Mucosa of descending colon (tissue), 3 donors: ENCODE measurements at regions of chr2 and their contacts with region 1.

Region 1: DNA sequence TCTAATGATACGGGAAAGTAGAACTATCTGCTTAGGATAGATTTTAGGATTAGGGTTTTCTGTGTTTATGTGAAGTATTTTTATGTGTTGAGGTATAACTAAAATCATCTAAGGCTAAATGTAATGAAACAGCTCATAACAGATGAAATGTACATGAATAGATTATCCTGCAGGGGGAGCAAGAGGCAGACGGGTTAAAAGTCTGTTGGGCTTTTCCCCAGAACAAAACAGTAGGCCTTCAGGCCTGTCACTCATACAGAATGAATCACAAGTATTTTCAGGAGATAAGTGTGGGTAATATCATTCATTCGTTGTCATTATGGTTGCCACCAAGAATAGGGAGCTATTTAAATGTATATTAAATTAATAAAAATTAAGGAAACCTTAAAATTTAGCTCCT is 107.9 kb upstream of the IL1R2 start:
- DNase-seq: peak in 1 of 3 donors; percentile 56
- ATAC-seq: peak; percentile 91
- H3K4me3 ChIP-seq: no peak overlapping the region
- H3K4me1 ChIP-seq: no peaks in the 10 kb centered on the region
- CTCF ChIP-seq: peak; percentile 43

Region 2: DNA sequence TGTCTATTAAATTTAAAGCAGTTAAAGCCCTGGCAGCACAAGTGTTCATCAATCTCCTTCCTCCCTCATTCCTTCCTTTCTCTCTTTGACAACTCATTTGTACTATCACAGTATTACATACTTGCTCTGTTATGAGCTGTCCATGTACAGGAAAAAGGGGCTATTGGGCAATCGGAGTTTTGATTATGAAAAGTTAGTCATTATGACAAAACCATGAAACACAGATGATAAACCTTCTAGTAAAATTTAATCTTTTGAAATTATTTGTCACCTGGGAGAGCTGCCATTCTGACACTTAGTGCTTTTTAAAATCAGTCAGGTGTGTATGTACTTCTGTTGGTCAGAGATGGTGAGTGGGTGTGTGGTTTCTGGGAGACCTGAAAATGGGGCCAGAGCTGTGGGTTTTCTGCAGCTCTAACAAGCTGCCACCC is 147.0 kb before region 1 on chr2:
- intact Hi-C with region 1: no loop called
- DNase-seq: no peak
- ATAC-seq: peak; percentile 26
- H3K4me3 ChIP-seq: no peak overlapping the region
- H3K4me1 ChIP-seq: peaks cover 7% of the 10 kb centered on the region
- CTCF ChIP-seq: no peak

Region 3: DNA sequence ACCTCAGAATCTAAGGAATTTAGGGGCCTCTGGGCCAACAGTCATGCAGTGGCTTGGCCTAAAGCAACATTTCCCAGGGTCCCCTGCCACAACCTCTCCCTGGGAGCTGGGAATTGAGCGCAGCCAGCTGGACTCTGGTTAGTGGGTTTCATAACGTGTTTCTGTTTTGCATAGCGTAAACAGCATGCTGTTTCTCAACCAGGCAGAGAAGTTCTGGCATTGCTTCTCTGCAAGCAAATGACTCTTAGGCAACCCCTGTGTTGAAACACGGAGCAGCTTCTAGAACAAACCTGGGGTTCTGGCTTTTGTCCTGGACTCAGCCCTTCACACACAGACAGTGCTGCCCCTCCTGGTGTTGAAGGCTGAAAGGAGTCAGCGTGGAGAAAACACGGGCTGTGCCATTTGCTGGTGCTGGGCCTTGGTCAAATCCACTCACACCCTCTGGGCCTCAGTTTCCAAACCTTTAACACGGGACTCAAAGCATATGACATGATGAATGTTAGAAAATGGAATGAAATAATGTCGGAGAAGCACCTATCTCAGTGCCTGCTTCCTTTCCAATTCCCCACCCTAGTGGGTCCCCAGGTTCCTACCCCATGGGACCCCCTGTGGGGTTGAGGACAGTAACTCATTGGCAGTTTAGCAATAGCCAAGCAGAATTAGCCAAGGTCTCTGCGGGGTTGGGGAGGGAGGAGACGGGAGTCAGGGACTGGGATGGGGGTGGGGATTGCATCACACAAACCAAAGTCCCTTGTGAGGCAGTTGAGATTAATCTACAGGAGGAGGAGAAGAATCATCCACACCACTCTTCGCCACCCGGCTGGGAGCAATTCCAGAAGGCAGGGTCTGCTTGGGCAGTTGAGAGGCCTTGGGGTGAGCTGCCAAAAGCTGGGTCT is 77.7 kb after region 1 on chr2:
- intact Hi-C with region 1: loop called in 1 of 2 experiments (anchors 10 kb)
- DNase-seq: peak; percentile 47 to 69 (median 60)
- ATAC-seq: peak; percentile 71
- H3K4me3 ChIP-seq: no peak overlapping the region
- H3K4me1 ChIP-seq: no peaks in the 10 kb centered on the region
- CTCF ChIP-seq: no peak

Region 4: DNA sequence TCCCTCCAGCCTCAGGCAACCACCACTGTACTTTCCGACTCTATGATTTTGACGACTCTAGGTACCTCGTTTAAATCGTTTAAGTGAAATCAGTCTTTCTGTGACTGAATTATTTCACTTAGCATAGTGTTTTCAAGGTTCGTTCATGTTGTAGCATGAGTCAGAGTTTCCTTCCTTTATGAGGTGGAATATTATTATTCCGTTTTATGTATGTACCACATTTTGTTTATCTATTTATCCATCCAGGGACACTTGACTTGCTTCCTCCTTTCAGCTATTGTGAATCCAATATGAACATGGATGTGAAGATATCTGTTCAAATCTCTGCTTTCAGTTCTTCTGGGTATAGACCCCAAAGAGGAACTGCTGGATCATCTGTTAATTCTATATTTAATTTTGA is 127.0 kb after region 1 on chr2:
- intact Hi-C with region 1: loop called in 1 of 2 experiments (anchors 10 kb)
- DNase-seq: no peak
- ATAC-seq: no peak
- H3K4me3 ChIP-seq: no peak overlapping the region
- H3K4me1 ChIP-seq: no peaks in the 10 kb centered on the region
- CTCF ChIP-seq: no peak